ENCODE measurements at regions of chr15 and their contacts with region 1.

Region 1: DNA sequence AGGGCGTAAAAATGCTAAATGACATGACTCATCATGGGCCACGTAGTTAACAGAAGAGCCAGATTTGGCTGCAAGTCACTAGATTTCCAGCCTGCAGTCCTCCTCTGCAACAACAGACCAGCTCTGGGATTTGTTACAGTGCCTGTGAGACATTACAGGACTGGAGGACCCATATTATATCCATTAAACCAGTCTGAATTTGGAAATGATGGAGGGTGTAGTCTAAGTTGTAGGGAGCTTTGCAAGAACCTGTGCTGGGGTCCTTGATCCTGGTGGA is 10.8 kb downstream of the ZNF774 start:
- DNase-seq: no peak
- H3K4me3 ChIP-seq: no peak overlapping the region
- H3K27ac ChIP-seq: no peak overlapping the region
- H3K4me1 ChIP-seq: no peaks in the 10 kb centered on the region
- H3K27me3 ChIP-seq: no peaks in the 10 kb centered on the region
- CTCF ChIP-seq: no peak
- POLR2A ChIP-seq: no peak

Region 2: DNA sequence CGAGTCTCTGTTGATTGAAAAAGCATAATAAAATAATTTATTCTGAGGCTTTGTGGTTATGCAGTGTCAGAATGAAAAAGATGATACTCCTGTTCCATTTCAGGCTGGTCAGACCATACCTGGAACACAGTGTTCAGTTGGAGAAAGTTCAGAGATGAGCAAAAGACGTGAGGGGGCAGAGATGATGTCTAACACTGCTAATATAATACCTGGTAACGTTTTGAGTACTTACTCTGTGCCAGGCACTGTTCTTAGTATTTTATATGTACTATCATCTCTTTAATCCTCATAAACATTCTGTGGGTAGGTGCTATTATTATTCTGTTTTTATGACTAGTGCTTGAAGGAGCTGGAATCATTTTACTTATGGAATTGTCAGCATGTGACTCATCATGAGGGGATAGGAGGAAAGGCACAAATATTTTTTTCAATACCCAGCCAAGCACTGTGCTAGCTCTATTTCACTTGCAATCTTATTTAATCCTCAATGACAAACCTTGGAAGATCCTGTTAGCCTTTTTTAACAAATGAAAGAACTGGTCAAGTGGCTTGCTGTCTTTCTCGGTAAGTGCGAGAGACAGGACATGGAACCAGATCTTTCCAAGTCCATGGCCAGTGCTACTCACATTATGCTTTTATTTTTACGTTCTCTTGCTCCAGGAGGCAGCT is 57.0 kb after region 1 on chr15:
- intact Hi-C with region 1: no loop called
- DNase-seq: no peak
- H3K4me3 ChIP-seq: no peak overlapping the region
- H3K27ac ChIP-seq: peak overlapping the region; percentile 46 to 58
- H3K4me1 ChIP-seq: peaks cover 23% of the 10 kb centered on the region
- H3K27me3 ChIP-seq: no peaks in the 10 kb centered on the region
- CTCF ChIP-seq: no peak
- POLR2A ChIP-seq: no peak

Region 3: DNA sequence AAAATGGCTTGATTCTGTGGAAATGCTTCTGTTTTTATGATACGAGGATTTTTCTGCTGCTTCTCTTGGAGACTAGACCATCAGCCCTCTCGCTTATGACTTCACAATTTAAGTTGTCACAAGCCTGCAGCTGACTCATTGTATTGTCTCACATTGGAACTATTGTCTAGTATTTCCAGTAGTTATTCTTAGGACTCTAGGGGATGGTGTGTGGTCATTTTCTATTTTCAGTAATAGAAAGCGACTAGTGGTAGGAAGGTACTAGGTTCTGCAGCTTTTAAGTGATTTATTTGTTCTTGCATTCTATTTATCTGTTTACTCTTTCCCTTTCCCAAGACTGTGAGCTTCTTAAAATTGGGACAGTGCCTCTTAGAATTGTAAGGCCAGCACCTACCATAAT is 100.5 kb after region 1 on chr15:
- intact Hi-C with region 1: loop called (anchors 5 kb)
- DNase-seq: no peak
- H3K4me3 ChIP-seq: no peak overlapping the region
- H3K27ac ChIP-seq: no peak overlapping the region
- H3K4me1 ChIP-seq: no peaks in the 10 kb centered on the region
- H3K27me3 ChIP-seq: no peaks in the 10 kb centered on the region
- CTCF ChIP-seq: peak in 1 of 4 experiments; percentile 10
- POLR2A ChIP-seq: no peak

Region 4: DNA sequence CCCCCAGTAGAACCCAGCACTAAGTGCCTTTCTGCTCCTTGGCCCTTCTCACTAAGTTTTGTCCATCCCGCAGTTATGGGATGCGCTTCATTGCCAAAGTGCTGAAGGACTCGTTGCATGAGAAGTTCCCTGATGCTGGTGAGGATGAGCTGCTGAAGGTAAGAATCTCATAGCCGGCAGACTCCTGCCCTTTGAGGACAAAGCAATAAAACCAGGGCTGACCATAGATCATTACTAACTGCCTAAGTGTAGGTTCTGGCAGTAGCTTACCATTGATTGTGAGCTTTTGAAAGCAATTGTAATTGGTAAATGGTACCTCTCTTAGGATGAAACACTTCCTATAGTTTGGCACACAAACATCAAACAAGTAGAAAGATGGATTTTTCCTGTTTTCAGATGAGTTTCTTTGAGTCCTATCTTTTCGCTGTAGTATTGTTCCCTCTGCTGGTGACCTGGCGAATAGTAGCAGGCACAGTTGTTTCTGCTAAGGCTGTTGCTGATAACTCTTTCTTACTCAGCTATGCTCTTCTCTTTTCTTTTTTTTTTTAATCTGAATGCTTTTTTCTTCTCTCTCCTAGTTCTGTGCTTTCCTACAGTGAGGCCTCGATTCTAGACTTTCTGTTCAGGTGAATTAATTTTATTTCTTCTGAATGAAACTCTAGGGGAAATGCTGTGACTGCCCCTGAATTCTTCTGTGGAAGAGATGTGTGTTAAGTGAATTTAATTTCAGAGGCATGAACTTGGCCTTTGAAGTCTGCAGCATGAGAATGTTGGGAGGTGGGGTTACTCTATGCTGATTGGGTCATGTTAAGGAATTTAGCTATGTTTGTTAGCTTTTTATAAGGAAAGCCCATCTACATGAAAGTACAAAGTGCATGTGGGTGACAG is 119.5 kb after region 1 on chr15:
- intact Hi-C with region 1: loop called (anchors 5 kb)
- DNase-seq: peak; percentile 27
- H3K4me3 ChIP-seq: no peak overlapping the region
- H3K27ac ChIP-seq: no peak overlapping the region
- H3K4me1 ChIP-seq: peaks cover 6% of the 10 kb centered on the region
- H3K27me3 ChIP-seq: no peaks in the 10 kb centered on the region
- CTCF ChIP-seq: peak; percentile 35 to 87 (median 68)
- POLR2A ChIP-seq: no peak

Measured in prostate gland (tissue), 2 donors.